ENCODE measurements at regions of chr1 and their contacts with region 1.

Region 1: GRCh38 chr1:107782217-107782845 is 182.6 kb downstream of the VAV3 start:
- DNase-seq: no peak
- ATAC-seq: no peak
- H3K4me3 Mint-ChIP-seq: no peak overlapping the region
- H3K27ac Mint-ChIP-seq: no peak overlapping the region
- H3K4me1 Mint-ChIP-seq: peaks cover 22% of the 10 kb centered on the region
- H3K27me3 Mint-ChIP-seq: no peaks in the 10 kb centered on the region

Region 2: DNA sequence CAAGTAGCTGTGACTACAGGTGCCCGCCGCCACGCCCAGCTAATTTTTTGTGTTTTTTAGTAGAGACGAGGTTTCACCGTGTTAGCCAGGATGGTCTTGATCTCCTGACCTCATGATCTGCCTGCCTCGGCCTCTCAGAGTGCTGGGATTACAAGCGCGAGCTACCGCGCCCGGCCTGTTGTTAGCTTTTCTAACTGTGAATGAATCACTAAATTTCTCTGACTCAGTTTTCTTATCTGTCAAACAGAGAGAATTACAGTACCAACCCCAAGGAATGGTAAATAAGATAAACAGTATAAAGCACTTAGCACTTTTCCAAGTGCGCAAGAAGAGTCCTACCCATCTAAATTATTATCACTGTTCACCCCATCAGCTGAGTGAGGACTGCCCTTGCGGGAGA is 11.0 kb before region 1 on chr1:
- CTCF ChIA-PET with region 1: no interaction called
- DNase-seq: no peak
- ATAC-seq: no peak
- H3K4me3 Mint-ChIP-seq: no peak overlapping the region
- H3K27ac Mint-ChIP-seq: no peak overlapping the region
- H3K4me1 Mint-ChIP-seq: no peaks in the 10 kb centered on the region
- H3K27me3 Mint-ChIP-seq: no peaks in the 10 kb centered on the region

Region 3: GRCh38 chr1:107851418-107851817 is 69.1 kb after region 1 on chr1:
- CTCF ChIA-PET with region 1: no interaction called
- DNase-seq: no peak
- ATAC-seq: no peak
- H3K4me3 Mint-ChIP-seq: no peak overlapping the region
- H3K27ac Mint-ChIP-seq: no peak overlapping the region
- H3K4me1 Mint-ChIP-seq: peaks cover 7% of the 10 kb centered on the region
- H3K27me3 Mint-ChIP-seq: no peaks in the 10 kb centered on the region

Region 4: DNA sequence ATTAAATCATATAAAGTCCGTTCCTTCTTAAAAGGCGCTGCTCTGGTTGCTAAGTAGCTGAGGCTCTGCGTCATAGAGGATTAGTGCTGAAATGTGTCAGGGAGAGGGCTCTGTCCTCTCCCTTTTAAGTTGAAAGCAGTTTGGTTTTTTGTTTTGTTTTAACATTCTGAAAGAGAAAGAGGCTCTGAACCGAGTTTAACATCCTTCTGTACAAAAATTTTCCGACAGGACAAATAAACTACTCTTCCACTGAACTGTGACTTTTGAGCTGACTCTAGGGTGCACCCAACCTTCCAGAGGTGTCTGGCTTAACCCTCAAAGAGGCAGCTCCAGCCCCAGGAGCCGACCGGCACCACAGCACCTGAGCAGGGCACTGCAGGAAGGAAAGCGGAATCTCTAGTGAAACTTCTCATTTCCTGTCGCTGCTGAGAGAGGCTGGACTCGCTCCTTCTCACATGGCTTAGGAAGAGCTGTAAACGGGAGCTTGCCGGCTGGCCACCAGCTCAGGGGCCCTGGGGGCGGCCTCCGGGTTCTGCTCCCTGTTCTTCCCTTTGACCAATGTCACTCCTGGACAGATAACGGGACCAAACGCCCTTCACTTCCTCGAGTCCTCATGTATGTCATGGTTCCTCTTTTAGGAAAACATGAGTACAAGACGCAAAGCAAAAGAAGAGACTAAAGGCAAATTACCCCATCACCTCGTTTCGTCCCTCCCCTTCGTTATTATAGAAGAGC is 181.4 kb after region 1 on chr1:
- CTCF ChIA-PET with region 1: interaction called, 29 read pairs
- DNase-seq: peak; percentile 56
- ATAC-seq: peak; percentile 56
- H3K4me3 Mint-ChIP-seq: peak overlapping the region; percentile 83
- H3K27ac Mint-ChIP-seq: peak overlapping the region; percentile 80
- H3K4me1 Mint-ChIP-seq: peaks cover 23% of the 10 kb centered on the region
- H3K27me3 Mint-ChIP-seq: peaks cover 10% of the 10 kb centered on the region

Region 5: GRCh38 chr1:108118018-108118902 is 335.9 kb after region 1 on chr1:
- CTCF ChIA-PET with region 1: interaction called, 218 read pairs
- DNase-seq: no peak
- ATAC-seq: no peak
- H3K4me3 Mint-ChIP-seq: no peak overlapping the region
- H3K27ac Mint-ChIP-seq: no peak overlapping the region
- H3K4me1 Mint-ChIP-seq: no peaks in the 10 kb centered on the region
- H3K27me3 Mint-ChIP-seq: peaks cover 13% of the 10 kb centered on the region

Region 6: DNA sequence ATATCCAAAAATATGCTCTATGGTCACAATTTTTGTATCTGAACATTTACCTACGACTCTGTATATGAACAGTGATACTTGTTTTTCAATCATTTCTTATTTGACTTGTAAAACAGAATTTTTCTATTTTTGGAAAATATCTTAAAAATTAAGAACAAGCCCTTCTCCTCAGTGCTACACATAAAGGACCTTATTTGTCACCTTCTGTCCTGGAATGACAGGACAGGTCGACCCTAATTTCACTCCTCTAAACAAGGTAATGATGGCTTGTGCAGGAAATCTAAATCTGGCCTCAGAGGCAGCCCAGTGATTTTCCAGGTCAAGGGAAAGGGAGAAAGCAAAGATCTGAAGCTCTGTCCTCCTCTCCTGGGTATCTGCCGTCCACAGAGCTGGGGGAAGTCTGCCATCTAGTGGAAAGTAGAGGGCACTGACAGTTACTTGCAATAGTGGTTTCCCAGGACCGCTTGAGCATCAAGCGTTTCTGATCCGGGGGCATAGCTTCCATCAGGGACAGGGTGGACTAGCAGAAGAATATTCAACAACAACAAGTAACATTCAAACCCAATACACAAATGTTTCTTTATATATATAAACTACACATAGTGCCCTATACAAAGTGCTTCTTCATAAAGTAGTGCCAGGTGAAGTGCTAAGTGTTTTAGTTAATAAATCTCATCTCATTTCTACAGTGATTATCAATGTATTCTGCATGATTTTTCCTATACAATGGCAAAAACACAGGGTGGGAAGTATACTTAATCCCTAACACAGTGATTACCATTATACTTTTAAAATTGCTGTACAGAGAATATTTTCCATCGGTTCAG is 343.2 kb after region 1 on chr1:
- CTCF ChIA-PET with region 1: interaction called, 218 read pairs
- DNase-seq: peak; percentile 76
- ATAC-seq: peak; percentile 88
- H3K4me3 Mint-ChIP-seq: no peak overlapping the region
- H3K27ac Mint-ChIP-seq: no peak overlapping the region
- H3K4me1 Mint-ChIP-seq: no peaks in the 10 kb centered on the region
- H3K27me3 Mint-ChIP-seq: no peaks in the 10 kb centered on the region

Region 7: DNA sequence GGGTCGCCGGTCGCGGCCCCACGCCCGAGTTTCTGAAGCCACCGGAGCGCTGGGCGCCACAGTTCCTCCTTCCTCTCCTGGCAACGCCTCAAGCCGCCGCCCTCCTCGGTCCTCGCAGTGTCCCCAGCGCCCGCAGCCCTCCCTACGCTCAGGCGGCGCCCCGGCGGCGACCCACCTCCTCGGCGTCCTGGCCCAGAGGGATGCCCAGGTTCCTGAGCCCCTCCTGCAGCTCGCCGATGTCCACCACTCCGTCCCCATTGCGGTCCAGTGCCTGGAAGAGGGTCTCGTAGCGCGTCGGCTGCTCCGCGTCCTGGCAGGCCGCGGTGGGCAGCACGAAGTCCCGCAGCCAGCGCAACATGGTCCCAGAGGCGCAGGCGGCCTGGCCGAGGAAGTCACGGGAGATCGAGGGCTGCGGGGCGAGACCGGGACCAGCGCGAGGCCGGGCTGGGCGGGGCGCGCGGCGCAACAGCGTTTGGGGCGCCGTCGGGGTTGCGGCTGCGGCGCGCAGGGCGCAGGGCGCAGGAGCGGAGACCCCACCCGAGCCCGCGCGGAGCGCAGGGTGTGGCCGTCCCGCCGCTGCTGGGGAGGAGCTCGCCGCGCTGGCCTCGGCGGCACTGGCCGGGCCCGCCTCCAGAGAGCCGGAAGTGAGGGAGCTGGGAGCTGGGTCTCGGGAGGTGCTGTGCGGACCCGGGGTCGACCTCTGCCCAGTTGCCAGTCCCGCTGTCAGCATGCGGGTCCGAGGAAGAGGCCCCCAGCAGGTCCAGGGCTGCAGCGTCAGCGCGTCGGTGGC is 417.6 kb after region 1 on chr1 and contains the start of gene SLC25A24:
- CTCF ChIA-PET with region 1: interaction called, 10 read pairs
- DNase-seq: peak; percentile 89
- ATAC-seq: peak; percentile 98
- H3K4me3 Mint-ChIP-seq: peak within 1 kb of the TSS; percentile 90
- H3K27ac Mint-ChIP-seq: peak within 1 kb of the TSS; percentile 87
- H3K4me1 Mint-ChIP-seq: peaks cover 38% of the 10 kb centered on the region
- H3K27me3 Mint-ChIP-seq: peaks cover 4% of the 10 kb centered on the region
- total RNA-seq, gene SLC25A24: 24.8 to 25.7 TPM

Measured in activated CD8-positive, alpha-beta memory T cell treated with anti-CD3 and anti-CD28 coated beads, Interleukin-2, amount 10 ng/mL, durations not matched to agents 7 days and 5 days (primary cell).